ENCODE measurements at regions of chr10 and their contacts with region 1.

Region 1: GRCh38 chr10:125152450-125153368 is 7.7 kb downstream of the CTBP2 start:
- DNase-seq: no peak
- H3K4me3 ChIP-seq: peak overlapping the region; percentile 24 to 29
- H3K27ac ChIP-seq: peak overlapping the region; percentile 96 to 99
- H3K4me1 ChIP-seq: peaks cover 45% of the 10 kb centered on the region
- H3K27me3 ChIP-seq: no peaks in the 10 kb centered on the region
- CTCF ChIP-seq: no peak
- POLR2A ChIP-seq: no peak

Region 2: DNA sequence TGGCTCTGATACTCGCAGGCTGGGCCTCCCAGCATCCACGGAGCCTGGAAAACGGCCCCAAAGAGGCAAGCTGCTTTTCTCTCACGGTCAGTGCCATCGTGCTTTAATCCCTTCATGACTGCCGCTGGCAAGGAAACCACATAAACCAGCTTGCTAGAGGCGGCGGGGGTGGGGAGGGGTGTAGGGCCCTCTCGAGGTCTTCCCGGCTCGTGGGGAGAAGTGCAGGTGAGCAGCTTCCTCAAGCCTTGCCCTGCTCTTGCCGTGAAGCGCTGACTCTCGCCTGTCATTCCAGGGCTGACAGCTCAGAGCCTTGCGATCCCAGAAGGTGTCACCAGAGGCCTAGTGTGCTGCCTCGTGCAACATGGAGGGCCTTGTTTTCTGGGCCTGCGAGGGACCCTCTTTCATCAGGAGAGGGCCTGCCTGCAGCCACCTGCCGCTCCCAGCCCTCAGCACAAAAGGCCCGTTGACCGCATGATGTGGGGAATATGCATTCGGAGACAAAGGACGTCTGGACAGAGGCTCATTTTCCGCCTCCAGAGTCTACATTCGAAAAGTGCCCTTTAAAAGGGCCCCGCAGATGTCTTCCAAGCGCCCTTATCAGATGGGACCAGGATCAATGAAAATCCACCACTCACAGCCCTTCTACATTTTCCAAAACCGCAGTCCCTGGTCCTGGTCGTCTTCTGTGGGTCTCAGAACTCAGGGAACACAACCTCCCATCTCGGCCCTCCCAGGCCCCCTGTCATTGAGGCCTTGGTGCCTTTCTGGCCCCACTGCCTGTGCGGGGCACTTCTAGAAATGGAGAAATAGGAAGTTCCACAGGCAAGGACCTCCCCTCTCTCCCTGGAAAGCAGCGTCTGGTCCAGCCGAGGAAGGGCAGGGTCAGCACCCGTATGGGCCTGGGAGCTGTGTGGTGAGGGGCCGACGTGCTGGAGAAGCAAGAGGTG is 152.1 kb before region 1 on chr10:
- intact Hi-C with region 1: loop called (anchors 5 kb)
- DNase-seq: peak; percentile 64
- H3K4me3 ChIP-seq: no peak overlapping the region
- H3K27ac ChIP-seq: peak overlapping the region; percentile 72 to 73
- H3K4me1 ChIP-seq: peaks cover 30% of the 10 kb centered on the region
- H3K27me3 ChIP-seq: no peaks in the 10 kb centered on the region
- CTCF ChIP-seq: peak in 3 of 4 experiments; percentile 15 to 25 (median 17)
- POLR2A ChIP-seq: no peak

Region 3: DNA sequence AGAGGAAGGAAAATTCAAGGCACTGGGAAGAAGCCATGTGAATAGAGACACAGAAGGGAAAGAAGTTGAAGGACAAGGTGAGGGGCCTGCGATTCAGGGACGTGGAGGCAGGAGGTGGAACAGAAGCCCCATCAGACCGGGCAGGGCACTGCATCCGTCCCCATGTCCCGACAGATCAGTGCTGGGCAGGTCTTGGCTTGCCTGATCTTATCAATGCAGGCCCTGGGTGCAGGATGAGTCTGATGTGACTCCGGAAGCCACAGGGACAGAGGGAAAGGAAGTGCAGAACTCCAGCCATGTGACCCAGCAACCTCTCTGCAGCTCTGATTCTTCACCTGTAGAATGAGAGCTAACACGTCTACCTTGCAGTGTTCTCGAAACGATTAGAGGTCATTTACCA is 143.9 kb after region 1 on chr10:
- intact Hi-C with region 1: no loop called
- DNase-seq: no peak
- H3K4me3 ChIP-seq: no peak overlapping the region
- H3K27ac ChIP-seq: no peak overlapping the region
- H3K4me1 ChIP-seq: peaks cover 9% of the 10 kb centered on the region
- H3K27me3 ChIP-seq: no peaks in the 10 kb centered on the region
- CTCF ChIP-seq: no peak
- POLR2A ChIP-seq: no peak

Region 4: GRCh38 chr10:125700355-125700911 is 547.7 kb after region 1 on chr10:
- intact Hi-C with region 1: loop called (anchors 5 kb)
- DNase-seq: no peak
- H3K4me3 ChIP-seq: no peak overlapping the region
- H3K27ac ChIP-seq: no peak overlapping the region
- H3K4me1 ChIP-seq: no peaks in the 10 kb centered on the region
- H3K27me3 ChIP-seq: no peaks in the 10 kb centered on the region
- CTCF ChIP-seq: peak in 2 of 4 experiments; percentile 9 to 28
- POLR2A ChIP-seq: no peak

Region 5: GRCh38 chr10:125982260-125982948 is 829.7 kb after region 1 on chr10:
- intact Hi-C with region 1: no loop called
- DNase-seq: peak; percentile 43
- H3K4me3 ChIP-seq: no peak overlapping the region
- H3K27ac ChIP-seq: no peak overlapping the region
- H3K4me1 ChIP-seq: no peaks in the 10 kb centered on the region
- H3K27me3 ChIP-seq: no peaks in the 10 kb centered on the region
- CTCF ChIP-seq: peak; percentile 27 to 82 (median 65)
- POLR2A ChIP-seq: no peak

Measured in prostate gland (tissue), 2 donors.